ENCODE measurements at regions of chr7 and their contacts with region 1.

Region 1: DNA sequence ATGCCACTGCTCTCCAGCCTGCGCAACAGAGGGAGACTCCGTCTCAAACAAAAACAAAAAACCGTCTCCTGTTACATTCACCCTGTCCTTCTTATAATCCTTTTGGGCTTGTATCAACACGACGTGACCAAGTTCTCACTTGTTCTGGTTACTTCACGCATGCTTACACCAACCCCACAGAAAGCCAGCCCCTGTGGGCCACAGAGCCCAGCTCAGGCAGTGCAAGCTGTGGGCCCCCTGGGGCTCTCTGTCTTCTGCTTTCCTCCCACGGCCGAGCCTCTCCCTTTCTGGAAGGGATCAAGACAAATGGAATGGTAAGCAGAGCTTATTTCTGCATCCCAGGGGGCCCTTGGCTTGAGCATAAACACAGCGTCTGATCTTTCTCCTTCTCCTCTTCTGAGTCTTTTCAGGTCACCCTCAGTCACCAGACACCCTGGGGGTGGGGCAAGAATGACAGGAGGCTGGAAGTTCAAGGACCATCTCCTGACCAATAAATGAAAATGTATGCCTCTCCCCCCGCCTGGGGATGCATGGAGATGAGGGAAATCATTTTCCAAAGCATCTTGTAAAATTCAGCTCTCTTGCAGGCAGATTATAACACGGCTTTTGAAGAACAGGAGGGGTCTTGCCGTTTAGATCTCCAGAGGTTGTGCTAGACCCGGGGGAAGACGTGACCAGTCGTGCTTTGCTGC is 19.0 kb upstream of the TRIM56 start:
- DNase-seq: no peak

Region 2: DNA sequence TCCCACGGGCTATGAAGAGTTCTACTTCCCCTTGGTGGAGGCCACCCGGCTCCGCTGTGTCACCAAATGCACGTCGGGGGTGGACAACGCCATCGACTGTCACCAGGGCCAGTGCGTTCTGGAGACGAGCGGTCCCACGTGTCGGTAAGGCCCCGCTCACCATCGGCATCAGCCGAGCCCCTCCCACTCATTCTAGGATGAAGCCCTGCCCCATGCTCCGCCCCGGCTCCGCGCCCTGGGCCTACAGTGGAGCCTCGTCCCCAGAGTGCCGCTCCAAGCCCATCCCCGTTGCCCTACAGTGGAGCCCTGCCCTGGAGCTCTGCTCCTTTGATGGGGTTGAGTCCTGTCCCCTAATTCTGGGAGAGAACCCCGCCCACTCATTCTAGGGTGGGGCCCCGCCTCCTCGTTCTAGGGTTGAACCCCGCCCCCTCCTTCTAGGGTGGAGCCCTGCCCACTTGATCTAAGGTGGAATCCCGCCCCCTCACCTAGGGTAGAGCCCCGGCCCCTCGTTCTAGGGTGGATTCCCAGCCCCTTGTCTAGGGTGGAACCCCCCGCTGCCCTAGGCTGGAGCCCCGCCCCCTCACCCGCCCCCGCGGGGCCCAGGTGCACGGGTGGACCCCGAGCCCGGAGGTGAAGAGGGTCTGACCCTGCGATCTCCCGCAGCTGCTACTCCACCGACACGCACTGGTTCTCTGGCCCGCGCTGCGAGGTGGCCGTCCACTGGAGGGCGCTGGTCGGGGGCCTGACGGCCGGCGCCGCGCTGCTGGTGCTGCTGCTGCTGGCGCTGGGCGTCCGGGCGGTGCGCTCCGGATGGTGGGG is 100.4 kb before region 1 on chr7:
- in situ Hi-C with region 1: loop called (anchors 10 kb)
- DNase-seq: peak; percentile 84